Mammary epithelial cell (primary cell): ENCODE measurements at regions of chr4 and their contacts with region 1.

Region 1: GRCh38 chr4:15396157-15396800 is 31.6 kb upstream of the C1QTNF7 start:
- DNase-seq: peak; percentile 29
- H3K4me3 ChIP-seq: no peak overlapping the region
- H3K27ac ChIP-seq: no peak overlapping the region
- H3K4me1 ChIP-seq: peaks cover 33% of the 10 kb centered on the region
- H3K27me3 ChIP-seq: no peaks in the 10 kb centered on the region
- CTCF ChIP-seq: peak; percentile 71 to 80

Region 2: DNA sequence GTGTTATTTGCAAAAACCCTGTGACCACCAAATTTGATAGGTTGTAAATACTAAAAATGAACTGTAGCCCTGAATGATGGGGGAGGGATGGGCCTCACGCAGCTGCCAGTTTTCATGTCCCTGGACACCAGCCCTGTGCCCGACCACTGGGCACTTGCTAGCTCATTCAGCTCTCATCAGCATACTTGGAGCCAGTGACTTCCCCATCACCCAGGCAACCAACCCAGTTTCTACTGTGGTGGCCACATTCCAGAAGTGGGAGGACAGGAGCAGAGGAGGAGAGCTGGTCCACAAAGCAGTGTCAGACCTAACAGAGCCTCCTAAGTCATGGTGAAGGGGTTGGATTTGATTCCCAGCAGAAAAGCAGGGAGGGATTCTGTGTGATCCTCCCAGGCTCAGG is 265.8 kb before region 1 on chr4:
- CTCF ChIA-PET with region 1: no interaction called
- dilution Hi-C with region 1: no loop called
- in situ Hi-C with region 1: no loop called
- intact Hi-C with region 1: no loop called
- DNase-seq: no peak
- H3K4me3 ChIP-seq: no peak overlapping the region
- H3K27ac ChIP-seq: no peak overlapping the region
- H3K4me1 ChIP-seq: no peaks in the 10 kb centered on the region
- H3K27me3 ChIP-seq: no peaks in the 10 kb centered on the region
- CTCF ChIP-seq: no peak

Region 3: GRCh38 chr4:15231265-15232091 is 164.8 kb before region 1 on chr4:
- CTCF ChIA-PET with region 1: no interaction called
- dilution Hi-C with region 1: no loop called
- in situ Hi-C with region 1: loop called (anchors 10 to 25 kb)
- intact Hi-C with region 1: loop called (anchors 2 kb)
- DNase-seq: peak; percentile 68
- H3K4me3 ChIP-seq: no peak overlapping the region
- H3K27ac ChIP-seq: no peak overlapping the region
- H3K4me1 ChIP-seq: peaks cover 30% of the 10 kb centered on the region
- H3K27me3 ChIP-seq: peaks cover 2% of the 10 kb centered on the region
- CTCF ChIP-seq: peak; percentile 69 to 76

Region 4: GRCh38 chr4:15238720-15239119 is 157.6 kb before region 1 on chr4:
- CTCF ChIA-PET with region 1: no interaction called
- dilution Hi-C with region 1: no loop called
- in situ Hi-C with region 1: loop called (anchors 10 to 25 kb)
- intact Hi-C with region 1: loop called (anchors 1 kb)
- DNase-seq: peak; percentile 25
- H3K4me3 ChIP-seq: no peak overlapping the region
- H3K27ac ChIP-seq: no peak overlapping the region
- H3K4me1 ChIP-seq: peaks cover 13% of the 10 kb centered on the region
- H3K27me3 ChIP-seq: no peaks in the 10 kb centered on the region
- CTCF ChIP-seq: peak; percentile 68 to 79

Region 5: GRCh38 chr4:15344041-15344440 is 52.2 kb before region 1 on chr4:
- CTCF ChIA-PET with region 1: no interaction called
- dilution Hi-C with region 1: no loop called
- in situ Hi-C with region 1: no loop called
- intact Hi-C with region 1: no loop called
- DNase-seq: peak; percentile 52
- H3K4me3 ChIP-seq: no peak overlapping the region
- H3K27ac ChIP-seq: no peak overlapping the region
- H3K4me1 ChIP-seq: peaks cover 15% of the 10 kb centered on the region
- H3K27me3 ChIP-seq: no peaks in the 10 kb centered on the region
- CTCF ChIP-seq: no peak

Region 6: GRCh38 chr4:15425520-15425919 is 29.2 kb after region 1 on chr4:
- CTCF ChIA-PET with region 1: no interaction called
- dilution Hi-C with region 1: no loop called
- in situ Hi-C with region 1: no loop called
- intact Hi-C with region 1: loop called (anchors 1 kb)
- DNase-seq: peak; percentile 73
- H3K4me3 ChIP-seq: no peak overlapping the region
- H3K27ac ChIP-seq: no peak overlapping the region
- H3K4me1 ChIP-seq: peaks cover 16% of the 10 kb centered on the region
- H3K27me3 ChIP-seq: no peaks in the 10 kb centered on the region
- CTCF ChIP-seq: no peak

Region 7: DNA sequence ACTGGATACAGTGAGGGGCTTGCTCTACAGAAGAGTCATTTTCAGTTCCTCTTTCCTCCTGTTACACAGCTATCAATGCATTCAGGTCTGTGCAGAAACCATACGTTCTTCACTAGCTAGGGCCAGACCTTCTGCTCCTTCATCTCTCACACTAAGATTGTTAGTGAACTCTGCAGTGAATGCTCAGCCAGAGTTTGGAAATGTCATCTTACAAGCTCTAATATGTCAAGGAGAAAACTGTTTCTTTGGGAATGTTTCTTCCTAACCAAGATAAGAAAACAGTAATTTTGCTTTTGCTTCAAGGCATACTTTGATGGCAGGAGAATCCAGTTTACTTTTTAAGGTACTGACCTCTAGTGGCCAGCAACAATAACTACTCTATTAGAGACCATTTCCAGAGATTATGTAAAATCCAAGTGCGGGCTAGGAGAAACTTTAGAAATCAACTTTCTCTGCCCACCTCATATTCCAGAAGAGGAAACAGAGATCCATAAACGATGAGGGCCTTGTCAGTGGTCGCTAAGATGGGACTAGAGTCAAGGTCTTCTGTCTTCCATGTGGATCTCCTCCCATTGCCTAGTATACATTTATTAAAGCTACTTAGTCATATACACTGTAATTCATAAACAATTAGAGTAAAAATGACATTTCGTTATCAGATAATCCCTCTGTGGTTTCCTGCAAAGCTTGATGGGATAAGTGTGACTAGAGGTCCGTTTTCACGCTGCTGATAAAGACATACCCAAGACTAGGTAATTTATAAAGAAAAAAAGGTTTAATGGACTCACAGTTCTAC is 61.3 kb after region 1 on chr4:
- CTCF ChIA-PET with region 1: interaction called, 8 read pairs
- dilution Hi-C with region 1: no loop called
- in situ Hi-C with region 1: no loop called
- intact Hi-C with region 1: loop called (anchors 1 kb)
- DNase-seq: no peak
- H3K4me3 ChIP-seq: no peak overlapping the region
- H3K27ac ChIP-seq: no peak overlapping the region
- H3K4me1 ChIP-seq: peaks cover 4% of the 10 kb centered on the region
- H3K27me3 ChIP-seq: peaks cover 2% of the 10 kb centered on the region
- CTCF ChIP-seq: peak; percentile 66 to 72

Region 8: GRCh38 chr4:15649914-15650545 is 253.8 kb after region 1 on chr4:
- CTCF ChIA-PET with region 1: no interaction called
- dilution Hi-C with region 1: no loop called
- in situ Hi-C with region 1: no loop called
- intact Hi-C with region 1: loop called (anchors 5 kb)
- DNase-seq: peak; percentile 49
- H3K4me3 ChIP-seq: no peak overlapping the region
- H3K27ac ChIP-seq: peak overlapping the region; percentile 20
- H3K4me1 ChIP-seq: peaks cover 17% of the 10 kb centered on the region
- H3K27me3 ChIP-seq: no peaks in the 10 kb centered on the region
- CTCF ChIP-seq: peak; percentile 75